OCI-LY7 (cell line): ENCODE measurements at regions of chr16 and their contacts with region 1.

Region 1: GRCh38 chr16:47141773-47142485 is 1.8 kb downstream of the NETO2 start:
- DNase-seq: peak; percentile 88
- H3K4me3 ChIP-seq: peak overlapping the region; percentile 59
- H3K27ac ChIP-seq: no peak overlapping the region
- H3K4me1 ChIP-seq: peaks cover 19% of the 10 kb centered on the region
- CTCF ChIP-seq: peak; percentile 99

Region 2: DNA sequence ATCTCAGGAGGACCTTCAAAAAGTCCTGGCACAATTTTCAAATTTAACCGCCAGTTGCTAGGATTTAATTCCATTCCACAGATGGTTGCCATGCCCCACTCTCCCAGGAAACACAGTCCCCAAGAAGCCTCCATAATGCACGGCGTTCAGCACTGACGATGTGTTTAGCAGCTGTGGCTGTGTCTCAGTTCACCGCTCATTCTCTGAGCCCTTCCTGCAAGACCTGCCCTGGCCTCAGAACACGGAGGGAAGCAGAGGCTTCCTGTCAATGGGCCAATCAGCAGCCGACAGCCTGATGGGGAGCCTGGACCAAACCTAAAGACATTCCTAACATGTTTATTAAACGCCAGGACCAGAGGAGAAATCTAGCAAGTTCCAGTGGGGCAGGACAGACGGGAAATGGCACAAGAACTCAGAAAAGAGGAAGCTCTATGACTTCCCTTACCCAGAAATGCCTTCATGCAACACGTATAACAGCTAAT is 398.6 kb before region 1 on chr16:
- CTCF ChIA-PET with region 1: no interaction called
- POLR2A ChIA-PET with region 1: no interaction called
- intact Hi-C with region 1: no loop called
- DNase-seq: peak; percentile 86
- H3K4me3 ChIP-seq: peak overlapping the region; percentile 60
- H3K27ac ChIP-seq: peak overlapping the region; percentile 60
- H3K4me1 ChIP-seq: peaks cover 25% of the 10 kb centered on the region
- CTCF ChIP-seq: no peak

Region 3: GRCh38 chr16:46947900-46948547 is 193.9 kb before region 1 on chr16:
- CTCF ChIA-PET with region 1: no interaction called
- POLR2A ChIA-PET with region 1: no interaction called
- intact Hi-C with region 1: loop called (anchors 2 kb)
- DNase-seq: peak; percentile 67
- H3K4me3 ChIP-seq: no peak overlapping the region
- H3K27ac ChIP-seq: no peak overlapping the region
- H3K4me1 ChIP-seq: peaks cover 2% of the 10 kb centered on the region
- CTCF ChIP-seq: peak; percentile 85

Region 4: GRCh38 chr16:47058295-47059086 is 83.4 kb before region 1 on chr16:
- CTCF ChIA-PET with region 1: no interaction called
- POLR2A ChIA-PET with region 1: no interaction called
- intact Hi-C with region 1: no loop called
- DNase-seq: no peak
- H3K4me3 ChIP-seq: no peak overlapping the region
- H3K27ac ChIP-seq: no peak overlapping the region
- H3K4me1 ChIP-seq: no peaks in the 10 kb centered on the region
- CTCF ChIP-seq: no peak

Region 5: GRCh38 chr16:47311738-47312505 is 170.0 kb after region 1 on chr16:
- CTCF ChIA-PET with region 1: no interaction called
- POLR2A ChIA-PET with region 1: no interaction called
- intact Hi-C with region 1: loop called (anchors 10 kb)
- DNase-seq: peak; percentile 49
- H3K4me3 ChIP-seq: peak overlapping the region; percentile 43
- H3K27ac ChIP-seq: peak overlapping the region; percentile 80
- H3K4me1 ChIP-seq: peaks cover 31% of the 10 kb centered on the region
- CTCF ChIP-seq: no peak

Region 6: GRCh38 chr16:47492428-47493377 is 350.8 kb after region 1 on chr16:
- CTCF ChIA-PET with region 1: no interaction called
- POLR2A ChIA-PET with region 1: interaction called, 3 read pairs
- intact Hi-C with region 1: loop called (anchors 2 kb)
- DNase-seq: peak; percentile 82
- H3K4me3 ChIP-seq: peak overlapping the region; percentile 69
- H3K27ac ChIP-seq: peak overlapping the region; percentile 97
- H3K4me1 ChIP-seq: peaks cover 60% of the 10 kb centered on the region
- CTCF ChIP-seq: no peak

Region 7: GRCh38 chr16:48156790-48157209 is 1014.9 kb after region 1 on chr16:
- CTCF ChIA-PET with region 1: no interaction called
- POLR2A ChIA-PET with region 1: no interaction called
- intact Hi-C with region 1: loop called (anchors 2 kb)
- DNase-seq: peak; percentile 63
- H3K4me3 ChIP-seq: no peak overlapping the region
- H3K27ac ChIP-seq: no peak overlapping the region
- H3K4me1 ChIP-seq: no peaks in the 10 kb centered on the region
- CTCF ChIP-seq: peak; percentile 88